ENCODE measurements at regions of chr11 and their contacts with region 1.

Region 1: DNA sequence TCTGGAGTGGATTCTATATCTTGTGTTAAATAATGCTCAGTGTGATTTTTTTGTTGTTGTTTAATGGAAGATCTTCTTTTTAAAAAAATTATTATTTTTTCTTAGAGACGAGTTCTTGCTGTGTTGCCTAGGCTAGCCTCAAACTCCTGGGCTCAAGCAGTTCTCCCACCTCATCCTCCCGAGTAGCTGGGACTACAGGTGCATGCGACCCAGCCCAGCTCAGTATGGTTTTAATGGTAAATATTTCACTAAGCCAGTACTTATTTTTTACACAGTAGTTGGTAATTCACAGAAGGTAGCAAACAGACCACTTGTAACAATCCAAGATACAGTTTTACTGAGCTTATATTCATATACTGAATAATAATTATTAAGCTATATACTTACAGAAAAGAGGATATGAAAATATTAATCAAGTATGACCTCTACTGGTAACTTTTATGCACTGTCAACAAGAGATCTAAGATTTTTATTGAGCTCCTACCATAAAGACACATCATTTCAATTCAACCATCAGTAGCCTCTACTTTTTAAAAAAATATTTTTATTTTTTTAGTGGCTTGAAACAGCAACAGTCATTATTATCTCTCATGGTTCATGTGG is 6.1 kb upstream of the CD59 start:
- DNase-seq: peak in 2 of 3 donors; percentile 19 to 36
- H3K4me3 ChIP-seq: no peak overlapping the region
- H3K4me3 Mint-ChIP-seq: no peak overlapping the region
- H3K27ac ChIP-seq: no peak overlapping the region
- H3K27ac Mint-ChIP-seq: no peak overlapping the region
- H3K4me1 ChIP-seq: no peaks in the 10 kb centered on the region
- H3K4me1 Mint-ChIP-seq: no peaks in the 10 kb centered on the region
- H3K27me3 ChIP-seq: peaks cover 3 to 7% of the 10 kb centered on the region in 2 donors
- H3K27me3 Mint-ChIP-seq: peaks cover 5 to 12% (median 9%) of the 10 kb centered on the region in 3 donors
- CTCF ChIP-seq: peak; percentile 79

Region 2: GRCh38 chr11:33542921-33543320 is 199.4 kb before region 1 on chr11:
- intact Hi-C with region 1: loop called in 1 of 2 experiments (anchors 10 kb)
- DNase-seq: peak in 2 of 3 donors; percentile 5 to 16
- H3K4me3 ChIP-seq: no peak overlapping the region
- H3K4me3 Mint-ChIP-seq: no peak overlapping the region
- H3K27ac ChIP-seq: no peak overlapping the region
- H3K27ac Mint-ChIP-seq: no peak overlapping the region
- H3K4me1 ChIP-seq: no peaks in the 10 kb centered on the region
- H3K4me1 Mint-ChIP-seq: peaks cover 5% of the 10 kb centered on the region
- H3K27me3 ChIP-seq: no peaks in the 10 kb centered on the region
- H3K27me3 Mint-ChIP-seq: peaks cover 2 to 8% (median 4%) of the 10 kb centered on the region in 3 donors
- CTCF ChIP-seq: peak; percentile 48

Region 3: GRCh38 chr11:33761471-33761870 is 19.1 kb after region 1 on chr11:
- intact Hi-C with region 1: no loop called
- DNase-seq: no peak
- H3K4me3 ChIP-seq: no peak overlapping the region
- H3K4me3 Mint-ChIP-seq: no peak overlapping the region
- H3K27ac ChIP-seq: no peak overlapping the region
- H3K27ac Mint-ChIP-seq: no peak overlapping the region
- H3K4me1 ChIP-seq: no peaks in the 10 kb centered on the region
- H3K4me1 Mint-ChIP-seq: no peaks in the 10 kb centered on the region
- H3K27me3 ChIP-seq: no peaks in the 10 kb centered on the region
- H3K27me3 Mint-ChIP-seq: peaks cover 0 to 2% (median 0%) of the 10 kb centered on the region in 3 donors
- CTCF ChIP-seq: no peak

Measured in CD14-positive monocyte (primary cell).